ENCODE measurements at regions of chr12 and their contacts with region 1.

Region 1: GRCh38 chr12:87848248-87848868 is 180.8 kb downstream of the C12orf50 start:
- DNase-seq: no peak
- H3K4me3 ChIP-seq: no peak overlapping the region
- H3K27ac ChIP-seq: no peak overlapping the region
- H3K4me1 ChIP-seq: no peaks in the 10 kb centered on the region
- H3K27me3 ChIP-seq: no peaks in the 10 kb centered on the region
- CTCF ChIP-seq: peak; percentile 51 to 82 (median 78)
- EP300 ChIP-seq: no peak
- POLR2A ChIP-seq: no peak

Region 2: DNA sequence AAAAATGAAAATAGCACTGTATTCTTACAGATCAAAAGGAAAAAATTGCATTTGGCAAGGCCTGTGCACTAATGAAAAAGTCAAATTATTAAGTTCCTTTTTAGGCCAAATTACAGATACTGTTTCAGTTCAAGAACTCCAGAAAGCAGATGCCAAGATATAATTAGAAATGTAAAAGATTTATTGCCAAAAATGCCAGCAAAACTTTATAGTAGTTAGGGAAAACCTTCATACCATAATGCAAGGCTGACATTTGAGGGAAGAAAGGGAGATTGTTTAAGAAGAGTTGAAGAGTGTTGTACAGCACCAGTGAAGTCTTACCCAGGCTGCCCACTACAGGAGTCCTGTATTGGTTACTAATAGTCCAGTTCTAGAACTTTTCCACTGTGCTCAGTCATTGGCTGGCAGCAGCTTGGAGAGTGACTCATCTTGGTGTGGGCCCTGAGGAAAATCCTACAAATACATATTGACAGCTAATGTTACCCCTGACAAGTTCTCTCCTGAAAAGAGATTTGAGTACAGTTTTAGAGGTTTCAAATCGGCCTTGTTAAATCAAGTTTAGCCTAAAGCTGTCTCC is 419.6 kb before region 1 on chr12:
- intact Hi-C with region 1: loop called (anchors 5 kb)
- DNase-seq: no peak
- H3K4me3 ChIP-seq: no peak overlapping the region
- H3K27ac ChIP-seq: no peak overlapping the region
- H3K4me1 ChIP-seq: no peaks in the 10 kb centered on the region
- H3K27me3 ChIP-seq: no peaks in the 10 kb centered on the region
- CTCF ChIP-seq: no peak
- EP300 ChIP-seq: no peak
- POLR2A ChIP-seq: no peak

Region 3: GRCh38 chr12:87464565-87464964 is 383.8 kb before region 1 on chr12:
- intact Hi-C with region 1: no loop called
- DNase-seq: no peak
- H3K4me3 ChIP-seq: no peak overlapping the region
- H3K27ac ChIP-seq: no peak overlapping the region
- H3K4me1 ChIP-seq: no peaks in the 10 kb centered on the region
- H3K27me3 ChIP-seq: no peaks in the 10 kb centered on the region
- CTCF ChIP-seq: no peak
- EP300 ChIP-seq: no peak
- POLR2A ChIP-seq: no peak

Measured in esophagus muscularis mucosa (tissue), 4 donors.